ENCODE measurements at regions of chr1 and their contacts with region 1.

Region 1: GRCh38 chr1:10796019-10796944 is at the start of gene CASZ1:
- DNase-seq: peak; percentile 86
- total RNA-seq, gene CASZ1: 18.4 to 21.5 TPM

Region 2: DNA sequence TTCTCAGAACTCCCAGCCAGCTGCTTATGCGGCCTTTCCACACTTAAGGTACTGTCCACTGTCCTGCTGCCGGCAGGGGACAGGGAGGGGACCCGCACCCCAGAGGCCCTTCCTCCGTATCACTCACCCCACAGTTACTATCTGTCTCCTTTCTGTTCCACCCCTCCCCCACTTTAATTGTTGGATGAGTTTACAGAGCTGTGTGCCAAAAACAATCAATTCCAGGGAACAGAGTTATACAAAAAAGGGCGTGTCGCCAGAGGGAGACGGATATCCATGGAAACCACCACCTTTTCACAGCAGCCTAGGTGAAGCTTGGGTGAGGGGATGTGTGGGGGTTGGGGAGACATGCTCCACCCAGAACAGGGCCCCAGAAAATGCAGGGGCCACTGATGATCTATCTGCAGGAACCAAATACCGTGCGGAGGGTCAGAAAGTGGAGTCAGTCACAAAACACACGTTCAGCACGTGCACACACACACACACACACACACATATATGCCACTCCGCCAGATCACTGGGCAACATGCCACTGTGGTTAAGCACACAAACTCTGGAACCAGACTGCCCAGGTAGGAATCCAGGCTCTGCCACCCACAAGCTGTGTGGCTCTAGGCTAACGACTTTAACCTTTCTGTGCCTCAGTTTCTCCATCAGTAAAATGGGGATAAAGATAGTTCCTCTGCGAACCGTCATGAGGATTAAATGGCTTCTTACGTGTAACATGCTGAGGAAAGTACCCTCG is 30.4 kb before region 1 on chr1:
- intact Hi-C with region 1: no loop called
- DNase-seq: no peak

Region 3: GRCh38 chr1:11970441-11971185 is 1174.3 kb after region 1 on chr1:
- intact Hi-C with region 1: loop called in 1 of 2 experiments (anchors 5 kb)
- DNase-seq: no peak